ENCODE measurements at regions of chr3 and their contacts with region 1.

Region 1: GRCh38 chr3:168165390-168166269 is 69.9 kb upstream of the GOLIM4 start:
- DNase-seq: peak; percentile 19
- H3K4me3 Mint-ChIP-seq: no peak overlapping the region
- H3K27ac Mint-ChIP-seq: no peak overlapping the region
- H3K4me1 Mint-ChIP-seq: no peaks in the 10 kb centered on the region
- H3K27me3 Mint-ChIP-seq: no peaks in the 10 kb centered on the region

Region 2: DNA sequence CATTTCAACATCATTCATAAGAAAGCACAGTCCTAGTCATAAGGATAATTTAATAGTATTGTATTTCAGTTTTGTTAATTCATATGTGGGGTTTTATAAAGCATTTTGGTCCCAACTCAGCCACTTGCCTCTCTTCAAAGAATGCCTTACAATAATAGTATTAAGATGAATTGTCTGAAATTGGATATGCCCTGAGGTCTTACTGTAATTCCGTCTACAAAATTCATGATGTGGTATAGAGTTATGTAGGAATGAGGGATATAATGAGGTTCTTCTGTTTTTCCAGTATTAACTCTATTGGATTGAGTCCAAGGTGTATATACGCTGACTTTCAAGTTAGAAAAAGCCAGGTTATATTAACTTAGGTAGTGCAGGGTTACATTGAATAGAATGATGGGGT is 246.9 kb before region 1 on chr3:
- CTCF ChIA-PET with region 1: no interaction called
- POLR2A ChIA-PET with region 1: no interaction called
- DNase-seq: no peak
- H3K4me3 Mint-ChIP-seq: no peak overlapping the region
- H3K27ac Mint-ChIP-seq: no peak overlapping the region
- H3K4me1 Mint-ChIP-seq: no peaks in the 10 kb centered on the region
- H3K27me3 Mint-ChIP-seq: no peaks in the 10 kb centered on the region

Region 3: GRCh38 chr3:168047190-168047795 is 118.3 kb before region 1 on chr3:
- CTCF ChIA-PET with region 1: interaction called, 25 read pairs
- POLR2A ChIA-PET with region 1: no interaction called
- DNase-seq: no peak
- H3K4me3 Mint-ChIP-seq: no peak overlapping the region
- H3K27ac Mint-ChIP-seq: no peak overlapping the region
- H3K4me1 Mint-ChIP-seq: no peaks in the 10 kb centered on the region
- H3K27me3 Mint-ChIP-seq: no peaks in the 10 kb centered on the region

Region 4: DNA sequence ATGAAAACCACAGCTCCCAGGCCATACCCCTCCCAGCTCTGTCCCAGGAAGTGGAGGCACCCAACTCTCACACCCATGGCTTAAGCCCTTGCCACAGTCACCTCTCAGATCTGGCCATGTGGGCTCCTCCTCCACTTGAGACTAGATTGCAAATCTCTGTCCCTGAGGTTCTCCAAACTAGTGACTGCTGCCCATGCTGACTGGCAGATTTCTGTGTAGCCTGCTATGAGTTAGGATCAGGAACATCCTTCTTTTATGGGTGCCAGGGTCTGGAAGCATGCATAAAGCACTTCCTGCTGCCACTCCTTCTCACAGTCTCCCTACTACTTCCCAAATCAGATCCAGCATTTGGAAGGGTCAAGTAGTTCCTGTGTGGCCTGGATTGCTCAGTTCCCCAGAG is 10.3 kb before region 1 on chr3:
- CTCF ChIA-PET with region 1: no interaction called
- POLR2A ChIA-PET with region 1: no interaction called
- DNase-seq: no peak
- H3K4me3 Mint-ChIP-seq: no peak overlapping the region
- H3K27ac Mint-ChIP-seq: no peak overlapping the region
- H3K4me1 Mint-ChIP-seq: no peaks in the 10 kb centered on the region
- H3K27me3 Mint-ChIP-seq: peaks cover 2% of the 10 kb centered on the region